WTC11 (cell line): ENCODE measurements at regions of chr7 and their contacts with region 1.

Region 1: GRCh38 chr7:129376076-129376777 is 58.0 kb upstream of the STRIP2 start:
- DNase-seq: peak; percentile 29
- ATAC-seq: peak; percentile 56
- H3K4me3 Mint-ChIP-seq: no peak overlapping the region
- H3K27ac Mint-ChIP-seq: peak overlapping the region; percentile 28
- H3K4me1 Mint-ChIP-seq: peaks cover 38% of the 10 kb centered on the region
- H3K27me3 Mint-ChIP-seq: no peaks in the 10 kb centered on the region
- CTCF ChIP-seq: peak; percentile 32; the same call in 1 of the 2 replicates

Region 2: DNA sequence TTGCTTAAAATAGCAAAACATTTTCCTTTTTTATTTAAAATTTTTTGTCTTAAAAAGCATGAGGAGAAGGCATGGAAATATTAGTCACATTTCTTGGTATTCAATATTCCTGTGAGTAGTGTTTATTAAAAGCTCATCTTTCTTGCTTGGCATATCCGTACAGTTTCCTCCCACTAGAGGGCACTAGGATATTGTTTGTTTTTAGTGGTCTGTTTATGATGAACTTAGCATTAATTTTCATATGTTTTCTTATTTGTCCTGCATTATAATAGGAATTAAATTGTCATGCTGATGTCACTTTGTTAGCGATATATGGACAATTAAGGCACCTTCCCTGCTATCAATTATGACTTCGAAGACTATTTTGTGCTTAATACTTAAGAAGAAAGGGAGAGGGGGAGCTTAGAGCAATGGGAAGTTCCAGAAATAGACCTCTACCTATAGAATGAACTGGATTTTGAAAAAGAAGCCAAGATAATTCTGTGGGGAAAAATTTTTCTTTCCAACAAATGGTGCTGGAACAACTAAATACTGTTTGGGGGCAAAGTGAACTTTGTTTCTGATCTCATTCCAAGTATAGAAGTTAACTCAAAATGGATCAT is 33.0 kb before region 1 on chr7:
- CTCF ChIA-PET with region 1: interaction called, 20 read pairs
- POLR2A ChIA-PET with region 1: no interaction called
- DNase-seq: no peak
- ATAC-seq: no peak
- H3K4me3 Mint-ChIP-seq: no peak overlapping the region
- H3K27ac Mint-ChIP-seq: no peak overlapping the region
- H3K4me1 Mint-ChIP-seq: peaks cover 18% of the 10 kb centered on the region
- H3K27me3 Mint-ChIP-seq: no peaks in the 10 kb centered on the region
- CTCF ChIP-seq: peak; percentile 25; the same call in 1 of the 2 replicates

Region 3: GRCh38 chr7:129389829-129390228 is 13.6 kb after region 1 on chr7:
- CTCF ChIA-PET with region 1: interaction called, 15 read pairs
- POLR2A ChIA-PET with region 1: no interaction called
- DNase-seq: no peak
- ATAC-seq: no peak
- H3K4me3 Mint-ChIP-seq: no peak overlapping the region
- H3K27ac Mint-ChIP-seq: no peak overlapping the region
- H3K4me1 Mint-ChIP-seq: peaks cover 33% of the 10 kb centered on the region
- H3K27me3 Mint-ChIP-seq: no peaks in the 10 kb centered on the region
- CTCF ChIP-seq: no peak

Region 4: DNA sequence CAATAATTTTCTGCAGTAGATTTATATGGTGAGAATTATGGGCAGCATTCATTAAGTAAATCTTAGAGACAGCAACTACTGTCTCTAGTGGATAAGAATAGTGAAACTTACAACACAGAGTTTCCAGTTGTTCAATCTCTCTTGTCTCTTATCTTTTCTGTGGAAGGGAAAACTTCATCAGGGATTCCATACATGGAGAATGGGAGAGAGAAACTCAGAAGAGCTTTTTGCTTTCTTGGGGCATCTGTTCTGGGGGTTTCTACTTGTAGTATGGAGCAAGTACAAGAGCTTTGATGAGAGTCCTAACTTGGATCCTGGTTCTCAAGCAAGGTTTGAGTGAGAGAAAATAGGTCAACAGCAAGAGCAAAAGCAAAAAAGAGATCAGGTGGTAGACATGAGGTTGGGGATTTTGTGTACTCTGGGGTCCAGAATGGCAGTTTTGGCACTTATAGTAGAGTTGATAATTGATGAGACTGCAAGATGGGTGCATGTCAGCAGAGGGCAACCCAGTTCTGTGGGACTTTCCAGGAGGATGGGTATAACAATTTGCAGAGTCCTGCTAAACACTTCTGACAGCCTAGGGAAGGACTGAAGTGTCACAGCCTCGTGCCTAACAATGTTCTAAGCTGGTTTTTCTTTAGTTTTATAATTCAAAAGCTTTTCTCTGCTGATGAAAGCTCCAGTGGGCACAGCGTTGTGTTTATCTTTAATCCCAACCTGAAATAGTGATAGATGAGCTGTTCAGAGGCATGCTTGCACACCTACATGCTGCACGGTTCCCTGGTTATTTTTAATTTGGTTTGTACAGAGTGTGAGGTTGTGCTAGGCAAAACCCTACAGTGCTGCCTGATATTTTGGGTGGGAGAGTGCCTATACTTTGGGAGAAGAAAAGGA is 26.0 kb after region 1 on chr7:
- CTCF ChIA-PET with region 1: interaction called, 10 read pairs
- POLR2A ChIA-PET with region 1: no interaction called
- DNase-seq: no peak
- ATAC-seq: peak; percentile 51
- H3K4me3 Mint-ChIP-seq: no peak overlapping the region
- H3K27ac Mint-ChIP-seq: no peak overlapping the region
- H3K4me1 Mint-ChIP-seq: peaks cover 17% of the 10 kb centered on the region
- H3K27me3 Mint-ChIP-seq: no peaks in the 10 kb centered on the region
- CTCF ChIP-seq: no peak